ENCODE measurements at regions of chr17 and their contacts with region 1.

Region 1: DNA sequence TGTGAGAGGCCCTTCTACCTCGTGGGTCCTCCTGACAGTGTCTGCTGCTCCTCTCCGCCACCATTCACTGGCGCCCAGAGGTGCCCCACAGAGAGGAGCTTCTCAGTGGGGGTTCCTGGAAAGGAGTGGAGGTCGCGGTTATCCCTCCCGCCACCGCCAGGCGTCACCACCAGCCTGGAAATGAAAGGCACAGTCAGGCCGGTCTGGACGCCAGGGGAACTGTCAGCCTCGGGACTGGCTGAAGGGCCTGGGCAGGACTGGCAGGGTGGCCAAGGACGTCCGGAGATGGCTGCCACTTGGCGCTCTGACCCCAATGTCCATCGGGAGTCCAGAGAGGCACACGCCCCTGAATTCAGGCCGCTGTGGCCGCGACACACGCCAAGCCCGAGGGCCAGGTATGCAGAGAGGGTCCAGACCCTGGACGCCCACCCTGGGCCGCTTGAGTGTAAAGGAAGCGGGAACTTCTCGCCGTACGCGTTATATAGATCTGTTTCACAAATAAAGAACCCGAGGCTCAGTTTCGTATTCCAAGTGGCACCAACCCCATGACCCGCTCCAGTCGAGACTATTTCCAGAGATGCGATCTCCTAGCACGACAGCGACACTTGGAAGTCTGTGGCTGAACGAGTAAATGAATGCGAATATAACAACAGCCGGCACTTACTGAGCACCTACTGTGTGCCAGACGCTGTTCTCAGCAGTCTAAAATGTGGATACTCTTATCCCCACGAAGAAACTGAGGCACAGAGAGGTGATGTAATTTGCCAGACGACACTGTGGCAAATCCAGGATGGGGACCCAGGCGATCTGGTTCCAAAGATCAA is 7.6 kb upstream of the NXPH3 start:
- DNase-seq: peak; percentile 89
- ATAC-seq: peak; percentile 72
- H3K4me3 Mint-ChIP-seq: peak overlapping the region; percentile 67
- H3K27ac Mint-ChIP-seq: no peak overlapping the region
- H3K4me1 Mint-ChIP-seq: peaks cover 9% of the 10 kb centered on the region
- H3K27me3 Mint-ChIP-seq: peaks cover 29% of the 10 kb centered on the region
- CTCF ChIP-seq: peak; percentile 45

Region 2: DNA sequence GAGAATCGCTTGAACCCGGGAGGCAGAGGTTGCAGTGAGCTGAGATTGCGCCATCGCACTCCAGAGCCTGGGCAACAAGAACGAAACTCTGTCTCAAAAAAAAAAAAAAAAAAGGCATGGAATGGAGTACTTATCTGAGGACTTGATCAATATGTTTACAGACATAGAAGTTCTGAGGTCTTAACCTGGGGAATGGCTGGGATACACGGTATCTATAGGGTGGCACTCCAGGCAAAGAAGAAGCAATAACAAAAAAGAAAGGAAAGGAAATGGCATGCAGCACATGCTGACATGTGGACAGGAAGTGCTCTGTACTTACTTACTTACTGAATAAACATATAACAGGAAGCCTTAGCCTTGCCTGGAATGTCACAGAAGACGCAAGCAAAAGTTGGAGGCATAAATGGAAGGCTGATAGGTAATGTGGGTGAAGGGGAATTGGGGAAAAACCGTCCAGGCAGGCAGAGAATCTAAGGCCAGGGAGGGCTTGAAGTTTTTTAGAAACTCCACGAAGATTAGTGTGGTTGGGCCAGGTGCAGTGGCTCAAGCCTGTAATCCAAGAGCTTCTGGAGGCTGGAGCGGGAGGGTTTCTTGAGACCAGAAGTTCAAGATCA is 119.9 kb after region 1 on chr17:
- CTCF ChIA-PET with region 1: interaction called, 18 read pairs
- POLR2A ChIA-PET with region 1: interaction called, 4 read pairs
- intact Hi-C with region 1: no loop called
- DNase-seq: no peak
- ATAC-seq: peak; percentile 45
- H3K4me3 Mint-ChIP-seq: peak overlapping the region; percentile 12
- H3K27ac Mint-ChIP-seq: peak overlapping the region; percentile 59
- H3K4me1 Mint-ChIP-seq: peaks cover 13% of the 10 kb centered on the region
- H3K27me3 Mint-ChIP-seq: no peaks in the 10 kb centered on the region
- CTCF ChIP-seq: no peak

Region 3: GRCh38 chr17:49779739-49780231 is 211.7 kb after region 1 on chr17:
- CTCF ChIA-PET with region 1: interaction called, 6 read pairs
- POLR2A ChIA-PET with region 1: no interaction called
- intact Hi-C with region 1: loop called (anchors 2 kb)
- DNase-seq: no peak
- ATAC-seq: no peak
- H3K4me3 Mint-ChIP-seq: no peak overlapping the region
- H3K27ac Mint-ChIP-seq: no peak overlapping the region
- H3K4me1 Mint-ChIP-seq: no peaks in the 10 kb centered on the region
- H3K27me3 Mint-ChIP-seq: no peaks in the 10 kb centered on the region
- CTCF ChIP-seq: no peak

Region 4: GRCh38 chr17:49851387-49852291 is 283.6 kb after region 1 on chr17:
- CTCF ChIA-PET with region 1: no interaction called
- POLR2A ChIA-PET with region 1: interaction called, 3 read pairs
- intact Hi-C with region 1: loop called (anchors 1 kb)
- DNase-seq: peak; percentile 55
- ATAC-seq: peak; percentile 65
- H3K4me3 Mint-ChIP-seq: peak overlapping the region; percentile 87
- H3K27ac Mint-ChIP-seq: no peak overlapping the region
- H3K4me1 Mint-ChIP-seq: peaks cover 12% of the 10 kb centered on the region
- H3K27me3 Mint-ChIP-seq: peaks cover 14% of the 10 kb centered on the region
- CTCF ChIP-seq: no peak

Measured in activated B cell treated with CpG ODN at 0.5 μM for 24 hours (primary cell).